Activated naive CD8-positive, alpha-beta T cell treated with anti-CD3 and anti-CD28 coated beads, Interleukin-2, amount 10 ng/mL, durations not matched to agents 7 days and 5 days (primary cell): ENCODE measurements at regions of chr6 and their contacts with region 1.

Region 1: DNA sequence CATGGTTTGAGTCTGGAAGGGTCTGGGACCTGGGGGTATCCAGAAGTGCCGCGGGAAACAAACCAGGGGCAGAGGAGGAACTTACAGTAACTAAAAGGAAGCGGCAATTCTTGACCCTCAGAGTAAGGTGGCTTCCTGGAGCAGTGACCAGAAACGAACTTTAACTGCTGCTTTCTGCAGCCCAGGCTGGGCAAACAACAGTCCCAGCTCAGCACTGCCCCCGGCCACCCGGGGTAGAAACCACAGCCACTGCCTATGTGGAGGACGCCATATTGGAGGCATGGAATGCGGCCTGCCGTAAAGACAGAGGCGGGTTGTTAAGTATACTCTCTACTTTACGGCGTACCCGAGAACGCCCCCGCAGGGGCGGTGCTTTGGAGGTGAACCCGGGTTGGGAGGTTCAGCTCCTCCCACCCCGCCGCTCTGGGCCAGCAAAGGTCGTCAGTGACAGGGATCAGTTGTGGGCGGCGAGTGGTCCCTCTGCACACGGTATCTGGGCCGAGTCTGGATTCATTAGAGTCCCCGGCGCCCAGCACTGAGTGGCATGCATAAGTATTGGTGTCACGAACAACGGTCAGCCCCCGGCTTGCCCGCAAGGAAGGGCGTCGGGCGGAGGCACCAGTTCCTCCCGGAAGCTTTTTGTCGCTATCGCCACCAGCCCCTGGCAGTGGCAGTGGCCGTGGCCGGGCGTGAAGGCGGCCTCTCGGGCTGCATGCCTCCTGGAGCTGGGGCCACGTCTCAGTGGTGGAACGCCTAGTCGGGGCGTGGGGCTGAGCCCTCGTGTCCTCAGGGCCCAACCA is at the start of gene PDSS2:
- DNase-seq: peak; percentile 94
- ATAC-seq: peak; percentile 94
- H3K4me3 Mint-ChIP-seq: peak within 1 kb of the TSS; percentile 93
- H3K27ac Mint-ChIP-seq: peak within 1 kb of the TSS; percentile 97
- H3K4me1 Mint-ChIP-seq: peaks cover 19% of the 10 kb centered on the region
- H3K27me3 Mint-ChIP-seq: no peaks in the 10 kb centered on the region
- total RNA-seq, gene PDSS2: 12.8 to 15.4 TPM

Region 2: GRCh38 chr6:106556368-106556960 is 903.0 kb before region 1 on chr6:
- POLR2A ChIA-PET with region 1: no interaction called
- DNase-seq: no peak
- ATAC-seq: no peak
- H3K4me3 Mint-ChIP-seq: no peak overlapping the region
- H3K27ac Mint-ChIP-seq: no peak overlapping the region
- H3K4me1 Mint-ChIP-seq: peaks cover 4% of the 10 kb centered on the region
- H3K27me3 Mint-ChIP-seq: no peaks in the 10 kb centered on the region

Region 3: DNA sequence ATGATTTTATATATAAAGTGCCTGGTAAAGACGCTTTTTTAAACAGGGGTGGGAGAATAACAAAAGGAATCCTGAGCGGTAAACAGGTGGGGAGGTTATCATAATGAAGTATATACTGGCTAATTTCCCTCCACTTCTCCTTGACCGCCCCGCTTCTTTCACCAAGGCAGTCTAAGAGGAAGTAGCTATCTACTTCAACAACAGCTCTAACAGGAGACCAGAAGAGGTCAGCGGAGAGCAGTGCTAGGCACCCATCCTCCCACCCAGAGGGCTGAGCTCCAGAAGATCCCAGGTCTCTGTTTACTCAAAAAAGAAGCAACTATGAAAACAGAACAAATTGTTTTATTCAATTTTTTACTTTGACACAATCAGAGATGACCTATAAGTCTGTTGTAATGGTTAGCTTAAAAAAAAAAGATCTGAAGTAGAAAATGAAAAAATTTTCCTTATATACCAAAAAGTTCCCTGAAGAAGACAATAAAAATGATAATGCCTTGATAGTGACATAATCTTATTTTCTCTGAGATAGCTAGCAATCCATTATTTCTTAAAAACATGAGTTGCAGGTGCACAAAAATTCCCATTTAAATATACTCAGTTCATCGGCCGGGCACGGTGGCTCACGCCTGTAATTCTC is 141.3 kb before region 1 on chr6:
- POLR2A ChIA-PET with region 1: interaction called, 16 read pairs
- DNase-seq: peak; percentile 33
- ATAC-seq: peak; percentile 72
- H3K4me3 Mint-ChIP-seq: no peak overlapping the region
- H3K27ac Mint-ChIP-seq: no peak overlapping the region
- H3K4me1 Mint-ChIP-seq: peaks cover 6% of the 10 kb centered on the region
- H3K27me3 Mint-ChIP-seq: no peaks in the 10 kb centered on the region

Region 4: GRCh38 chr6:107330168-107330567 is 129.3 kb before region 1 on chr6:
- POLR2A ChIA-PET with region 1: interaction called, 13 read pairs
- DNase-seq: no peak
- ATAC-seq: peak; percentile 92
- H3K4me3 Mint-ChIP-seq: peak overlapping the region; percentile 28
- H3K27ac Mint-ChIP-seq: peak overlapping the region; percentile 18
- H3K4me1 Mint-ChIP-seq: peaks cover 13% of the 10 kb centered on the region
- H3K27me3 Mint-ChIP-seq: no peaks in the 10 kb centered on the region

Region 5: GRCh38 chr6:107408723-107409122 is 50.8 kb before region 1 on chr6:
- POLR2A ChIA-PET with region 1: no interaction called
- DNase-seq: no peak
- ATAC-seq: no peak
- H3K4me3 Mint-ChIP-seq: no peak overlapping the region
- H3K27ac Mint-ChIP-seq: no peak overlapping the region
- H3K4me1 Mint-ChIP-seq: peaks cover 3% of the 10 kb centered on the region
- H3K27me3 Mint-ChIP-seq: no peaks in the 10 kb centered on the region

Region 6: GRCh38 chr6:107489636-107490565 is 30.4 kb after region 1 on chr6 and contains the start of gene SOBP:
- POLR2A ChIA-PET with region 1: interaction called, 35 read pairs
- DNase-seq: peak; percentile 69
- ATAC-seq: peak; percentile 66
- H3K4me3 Mint-ChIP-seq: peak within 1 kb of the TSS; percentile 91
- H3K27ac Mint-ChIP-seq: peak within 1 kb of the TSS; percentile 74
- H3K4me1 Mint-ChIP-seq: peaks cover 15% of the 10 kb centered on the region
- H3K27me3 Mint-ChIP-seq: peaks cover 36% of the 10 kb centered on the region
- total RNA-seq, gene SOBP: 1.2 to 1.4 TPM

Region 7: GRCh38 chr6:107618672-107619071 is 159.2 kb after region 1 on chr6:
- POLR2A ChIA-PET with region 1: interaction called, 14 read pairs
- DNase-seq: peak; percentile 67
- ATAC-seq: peak; percentile 99
- H3K4me3 Mint-ChIP-seq: peak overlapping the region; percentile 48
- H3K27ac Mint-ChIP-seq: peak overlapping the region; percentile 91
- H3K4me1 Mint-ChIP-seq: peaks cover 36% of the 10 kb centered on the region
- H3K27me3 Mint-ChIP-seq: peaks cover 3% of the 10 kb centered on the region

Region 8: GRCh38 chr6:107674995-107675738 is 215.7 kb after region 1 on chr6:
- POLR2A ChIA-PET with region 1: interaction called, 17 read pairs
- DNase-seq: peak; percentile 93
- ATAC-seq: peak; percentile 97
- H3K4me3 Mint-ChIP-seq: peak overlapping the region; percentile 79
- H3K27ac Mint-ChIP-seq: peak overlapping the region; percentile 95
- H3K4me1 Mint-ChIP-seq: peaks cover 20% of the 10 kb centered on the region
- H3K27me3 Mint-ChIP-seq: peaks cover 6% of the 10 kb centered on the region